Stomach (tissue), 19 donors: ENCODE measurements at regions of chr7 and their contacts with region 1.

Region 1: GRCh38 chr7:87806150-87806549 is 70.0 kb downstream of the SLC25A40 start:
- DNase-seq: no peak
- H3K4me3 ChIP-seq: no peak overlapping the region
- H3K27ac ChIP-seq: no peak overlapping the region
- H3K4me1 ChIP-seq: no peaks in the 10 kb centered on the region
- H3K27me3 ChIP-seq: no peaks in the 10 kb centered on the region
- CTCF ChIP-seq: no peak
- EP300 ChIP-seq: no peak
- POLR2A ChIP-seq: no peak

Region 2: DNA sequence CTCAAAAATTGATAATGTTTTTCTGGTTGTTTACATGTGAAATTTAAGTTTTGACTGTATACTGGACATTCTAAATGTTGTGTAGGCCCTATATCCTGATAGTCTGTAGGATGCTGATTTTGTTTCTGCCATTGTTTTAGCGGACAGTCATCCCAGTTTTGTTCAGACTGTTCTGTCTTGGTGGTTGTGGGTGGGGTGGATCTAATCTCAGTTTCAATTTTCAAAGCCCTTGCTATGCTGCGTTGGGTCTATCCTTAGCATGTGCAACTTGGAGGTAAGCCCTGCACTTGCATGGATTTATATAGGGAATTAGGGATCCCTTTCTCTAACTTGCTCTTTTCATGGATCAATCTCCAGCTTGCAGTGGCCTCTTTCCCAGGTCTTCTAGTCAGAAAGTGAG is 89.2 kb after region 1 on chr7:
- intact Hi-C with region 1: loop called (anchors 10 kb)
- DNase-seq: no peak
- H3K4me3 ChIP-seq: no peak overlapping the region
- H3K27ac ChIP-seq: no peak overlapping the region
- H3K4me1 ChIP-seq: no peaks in the 10 kb centered on the region
- H3K27me3 ChIP-seq: no peaks in the 10 kb centered on the region
- CTCF ChIP-seq: no peak
- EP300 ChIP-seq: no peak
- POLR2A ChIP-seq: no peak

Region 3: DNA sequence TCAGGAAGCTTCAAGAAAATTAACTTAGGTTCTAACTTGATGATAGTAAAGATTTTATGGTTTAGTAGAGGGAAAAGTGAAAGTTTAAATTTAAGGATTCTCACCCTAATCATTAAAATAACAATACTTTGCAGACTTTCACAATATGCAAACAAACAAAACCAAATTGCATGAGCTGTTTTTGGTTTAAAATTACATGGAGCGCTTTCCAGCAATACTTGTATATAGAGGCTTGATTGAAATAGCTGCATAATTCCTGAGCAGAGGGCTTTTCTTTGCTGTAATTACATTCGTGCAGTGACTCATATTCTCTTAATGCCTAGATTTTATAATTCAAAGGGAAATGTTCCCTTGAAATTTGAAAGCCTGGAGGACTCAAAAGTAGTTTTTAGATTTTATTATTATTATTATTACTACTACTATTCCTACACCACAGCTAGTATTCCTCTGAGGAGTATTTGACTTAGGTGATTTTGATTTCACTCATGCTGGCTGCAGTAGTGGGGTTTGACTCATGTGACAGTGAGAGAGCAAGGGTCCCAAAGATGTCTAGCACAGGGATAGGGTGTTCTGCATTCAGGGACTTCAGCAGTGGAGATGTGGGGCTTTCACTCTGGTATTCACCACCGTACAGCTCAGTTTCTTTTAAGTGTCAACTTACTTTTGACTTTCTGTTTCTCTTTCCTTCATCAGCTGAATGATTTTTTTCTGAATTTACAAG is 266.0 kb after region 1 on chr7:
- intact Hi-C with region 1: no loop called
- DNase-seq: no peak
- H3K4me3 ChIP-seq: no peak overlapping the region
- H3K27ac ChIP-seq: no peak overlapping the region
- H3K4me1 ChIP-seq: no peaks in the 10 kb centered on the region
- H3K27me3 ChIP-seq: no peaks in the 10 kb centered on the region
- CTCF ChIP-seq: no peak
- EP300 ChIP-seq: no peak
- POLR2A ChIP-seq: no peak

Region 4: GRCh38 chr7:88111136-88111743 is 305.1 kb after region 1 on chr7:
- intact Hi-C with region 1: no loop called
- DNase-seq: peak in 1 of 2 donors; percentile 71
- H3K4me3 ChIP-seq: no peak overlapping the region
- H3K27ac ChIP-seq: no peak overlapping the region
- H3K4me1 ChIP-seq: no peaks in the 10 kb centered on the region
- H3K27me3 ChIP-seq: no peaks in the 10 kb centered on the region
- CTCF ChIP-seq: peak in 5 of 7 experiments; percentile 22 to 50 (median 29)
- EP300 ChIP-seq: no peak
- POLR2A ChIP-seq: no peak